ENCODE measurements at regions of chr6 and their contacts with region 1.

Region 1: DNA sequence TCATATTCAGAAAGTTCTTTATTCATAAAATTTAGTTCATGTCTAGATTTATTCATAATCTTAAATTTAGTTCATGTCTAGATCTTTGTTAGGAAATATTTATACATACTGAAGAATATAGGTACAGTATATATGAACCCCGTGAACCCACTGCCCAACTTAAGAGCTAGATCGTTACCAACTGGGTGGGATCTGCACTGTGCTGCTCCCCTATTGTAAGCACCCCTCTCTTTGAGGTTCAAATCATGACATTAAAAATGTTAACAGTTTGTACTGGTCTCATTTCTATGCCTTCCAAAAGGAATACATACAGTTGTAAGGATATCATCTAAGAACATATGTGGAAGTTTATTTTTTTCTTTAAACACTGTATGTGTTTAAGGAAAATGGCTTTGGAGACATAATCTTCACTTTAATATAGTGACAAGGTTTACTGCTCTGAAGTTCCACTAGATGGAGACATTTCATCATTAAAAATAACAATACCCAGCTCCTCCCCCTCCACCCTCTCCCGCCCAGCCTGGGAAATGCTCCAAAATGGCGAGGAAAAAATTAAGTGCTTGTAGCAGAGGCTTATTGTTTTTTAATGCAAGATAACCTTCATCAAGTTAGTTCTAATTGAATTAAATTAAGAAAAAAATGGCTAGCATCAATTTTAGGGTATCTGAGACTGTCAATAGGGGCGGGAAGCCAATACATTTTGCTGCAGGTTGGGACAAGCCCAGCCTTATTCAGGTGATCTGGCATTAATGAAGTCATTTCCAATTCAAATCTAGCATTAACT is 104.1 kb upstream of the TRAF3IP2 start:
- DNase-seq: peak; percentile 66
- H3K4me3 Mint-ChIP-seq: no peak overlapping the region
- H3K27ac Mint-ChIP-seq: peak overlapping the region; percentile 74
- H3K4me1 Mint-ChIP-seq: peaks cover 53% of the 10 kb centered on the region
- H3K27me3 Mint-ChIP-seq: no peaks in the 10 kb centered on the region

Region 2: DNA sequence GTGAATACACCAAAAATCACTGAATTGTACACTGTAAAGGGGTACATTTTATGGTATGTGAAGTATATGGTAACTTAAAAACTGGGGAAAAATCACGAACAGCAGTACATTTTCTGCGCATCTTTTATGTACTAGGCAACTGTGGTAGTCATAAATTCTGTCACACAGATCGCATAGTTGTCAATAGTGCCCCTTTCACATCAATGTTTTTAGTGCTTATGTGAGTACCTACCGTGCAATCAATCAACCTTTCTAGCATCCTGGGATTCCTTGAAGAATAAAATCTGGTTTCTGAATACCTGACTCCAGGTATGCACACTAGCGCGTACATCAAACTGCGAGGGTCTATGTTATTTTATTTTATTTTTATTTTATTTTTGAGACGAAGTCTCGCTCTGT is 728.6 kb before region 1 on chr6:
- CTCF ChIA-PET with region 1: no interaction called
- DNase-seq: no peak
- H3K4me3 Mint-ChIP-seq: peak overlapping the region; percentile 99
- H3K27ac Mint-ChIP-seq: peak overlapping the region; percentile 99
- H3K4me1 Mint-ChIP-seq: peaks cover 46% of the 10 kb centered on the region
- H3K27me3 Mint-ChIP-seq: peaks cover 4% of the 10 kb centered on the region

Region 3: GRCh38 chr6:111721753-111722154 is 11.9 kb after region 1 on chr6:
- CTCF ChIA-PET with region 1: interaction called, 10 read pairs
- DNase-seq: peak; percentile 59
- H3K4me3 Mint-ChIP-seq: no peak overlapping the region
- H3K27ac Mint-ChIP-seq: no peak overlapping the region
- H3K4me1 Mint-ChIP-seq: peaks cover 63% of the 10 kb centered on the region
- H3K27me3 Mint-ChIP-seq: no peaks in the 10 kb centered on the region

Region 4: DNA sequence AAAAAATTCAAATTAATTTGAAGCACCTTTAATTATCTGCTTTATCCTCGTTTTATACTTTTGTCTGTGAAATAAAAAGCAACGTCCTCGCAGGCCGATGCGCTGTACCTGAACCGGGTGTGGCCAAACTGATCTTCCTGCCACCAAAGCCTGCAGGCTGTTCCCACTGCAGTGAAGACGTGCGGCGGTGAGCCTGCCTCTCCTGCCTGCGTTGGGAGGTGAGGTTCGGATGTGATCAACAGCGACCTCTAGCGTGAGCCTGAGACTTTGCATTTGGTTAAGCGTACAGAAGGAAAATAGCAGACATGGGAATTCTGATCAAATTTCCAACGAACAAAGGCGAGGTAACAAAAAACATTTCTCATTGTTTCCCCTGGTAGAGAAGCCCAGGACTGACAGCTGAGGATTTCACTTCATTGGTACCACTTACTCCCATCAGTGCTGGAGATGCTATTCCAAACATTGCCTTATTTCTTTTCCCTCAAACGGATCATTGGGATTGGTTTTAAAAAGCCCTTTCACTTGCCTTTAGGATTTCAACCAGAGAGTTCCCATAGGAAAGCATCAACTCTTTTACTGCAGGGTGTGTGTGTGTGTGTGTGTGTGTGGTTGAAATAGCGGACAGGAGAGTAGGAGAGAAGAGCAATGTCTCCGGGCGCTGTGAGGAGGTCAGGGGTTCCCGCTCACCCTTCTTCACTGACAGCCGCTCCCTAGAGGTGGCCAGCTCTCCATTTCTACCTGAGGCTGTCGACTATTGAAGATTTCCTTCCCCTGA is 287.5 kb after region 1 on chr6:
- CTCF ChIA-PET with region 1: interaction called, 59 read pairs
- DNase-seq: peak; percentile 87
- H3K4me3 Mint-ChIP-seq: peak overlapping the region; percentile 29
- H3K27ac Mint-ChIP-seq: peak overlapping the region; percentile 58
- H3K4me1 Mint-ChIP-seq: peaks cover 45% of the 10 kb centered on the region
- H3K27me3 Mint-ChIP-seq: no peaks in the 10 kb centered on the region

Region 5: GRCh38 chr6:112029045-112029822 is 319.4 kb after region 1 on chr6:
- CTCF ChIA-PET with region 1: interaction called, 16 read pairs
- DNase-seq: peak; percentile 72
- H3K4me3 Mint-ChIP-seq: no peak overlapping the region
- H3K27ac Mint-ChIP-seq: peak overlapping the region; percentile 98
- H3K4me1 Mint-ChIP-seq: peaks cover 64% of the 10 kb centered on the region
- H3K27me3 Mint-ChIP-seq: no peaks in the 10 kb centered on the region